PC-3 (cell line): ENCODE measurements at regions of chr15 and their contacts with region 1.

Region 1: DNA sequence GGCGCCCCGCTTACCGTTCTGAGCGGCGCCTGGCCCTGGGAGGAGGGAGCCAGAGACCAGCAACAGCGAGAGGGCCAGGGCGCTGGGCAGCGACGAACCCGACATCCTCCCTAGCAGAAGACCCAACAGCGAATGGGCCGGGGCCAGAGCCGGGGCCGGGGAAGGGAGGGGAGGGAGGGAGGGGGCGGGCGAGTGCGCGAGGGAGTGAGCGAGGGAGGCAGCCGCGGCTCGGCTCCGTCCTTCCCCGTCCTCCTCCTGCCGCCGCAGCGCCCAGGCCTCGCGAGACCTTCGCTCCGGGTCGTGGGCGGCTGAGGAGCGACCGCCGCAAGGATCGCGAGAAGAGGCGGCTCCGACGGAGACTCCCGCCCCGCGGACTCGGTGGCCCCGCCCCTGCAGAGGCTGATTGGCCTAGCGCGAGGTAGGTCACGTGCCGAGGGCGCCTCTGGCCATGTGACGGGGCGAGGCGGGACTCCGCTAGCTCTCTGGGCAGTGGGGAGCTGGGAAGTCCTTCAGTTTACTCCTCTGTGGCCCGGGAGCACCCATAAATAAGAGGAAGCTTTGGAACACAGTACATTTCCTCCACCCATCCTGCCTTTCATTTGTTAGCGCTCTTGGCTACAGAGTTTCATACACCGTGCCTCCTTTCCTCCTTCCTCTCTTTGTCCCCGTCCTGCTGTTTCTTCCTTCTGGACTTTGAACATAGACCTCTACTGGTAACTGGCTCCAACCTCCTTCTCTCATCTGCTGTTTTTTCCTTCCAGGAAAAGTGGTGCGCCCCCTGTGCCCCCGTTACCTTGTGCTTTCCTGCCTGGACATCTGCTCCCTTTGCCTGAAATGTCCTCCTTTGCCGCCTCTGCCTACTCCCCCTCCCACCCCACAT is at the start of gene NPTN:
- DNase-seq: peak; percentile 97
- ATAC-seq: peak; percentile 78
- H3K4me3 ChIP-seq: peak within 1 kb of the TSS; percentile 90
- H3K27ac ChIP-seq: peak within 1 kb of the TSS; percentile 100
- H3K4me1 ChIP-seq: peaks cover 57% of the 10 kb centered on the region
- H3K27me3 ChIP-seq: no peaks in the 10 kb centered on the region
- CTCF ChIP-seq: no peak
- total RNA-seq, gene NPTN: 115 and 164 TPM in 2 replicates

Region 2: DNA sequence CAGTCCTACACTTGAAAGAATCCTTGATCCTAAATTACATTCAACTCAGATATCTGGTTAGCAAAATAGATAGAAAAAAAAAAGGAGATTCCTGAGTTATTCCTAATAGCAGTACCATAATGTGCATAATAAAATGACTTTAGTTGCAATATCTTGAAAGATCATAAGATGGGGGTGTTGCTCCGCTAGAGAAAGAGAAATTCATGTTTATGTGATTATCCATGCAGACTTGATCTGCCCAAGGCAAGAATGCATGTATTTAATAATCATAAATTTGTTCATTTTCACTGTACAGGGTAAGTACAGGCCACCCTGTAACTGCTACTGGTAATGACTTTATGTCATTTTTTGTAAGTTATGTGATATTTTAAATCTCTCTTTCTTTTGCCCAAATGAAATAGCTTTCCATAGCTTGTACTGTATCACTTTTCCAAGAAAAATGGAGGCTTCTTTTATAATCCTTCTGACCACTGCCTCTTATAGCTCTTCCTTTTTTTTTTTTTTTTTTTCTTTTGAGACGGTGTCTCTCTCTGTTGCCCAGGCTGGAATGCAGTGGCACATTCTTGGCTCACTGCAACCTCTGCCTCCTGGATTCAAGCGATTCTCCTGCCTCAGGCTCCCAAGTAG is 349.1 kb before region 1 on chr15:
- CTCF ChIA-PET with region 1: no interaction called
- POLR2A ChIA-PET with region 1: no interaction called
- intact Hi-C with region 1: loop called (anchors 10 kb)
- DNase-seq: peak; percentile 55
- ATAC-seq: peak; percentile 42; the same call in 1 of the 2 replicates
- H3K4me3 ChIP-seq: no peak overlapping the region
- H3K27ac ChIP-seq: no peak overlapping the region
- H3K4me1 ChIP-seq: no peaks in the 10 kb centered on the region
- H3K27me3 ChIP-seq: no peaks in the 10 kb centered on the region
- CTCF ChIP-seq: peak; percentile 63

Region 3: GRCh38 chr15:73539212-73540125 is 93.9 kb before region 1 on chr15:
- CTCF ChIA-PET with region 1: no interaction called
- POLR2A ChIA-PET with region 1: no interaction called
- intact Hi-C with region 1: no loop called
- DNase-seq: no peak
- ATAC-seq: no peak
- H3K4me3 ChIP-seq: no peak overlapping the region
- H3K27ac ChIP-seq: no peak overlapping the region
- H3K4me1 ChIP-seq: peaks cover 14% of the 10 kb centered on the region
- H3K27me3 ChIP-seq: no peaks in the 10 kb centered on the region
- CTCF ChIP-seq: no peak

Region 4: DNA sequence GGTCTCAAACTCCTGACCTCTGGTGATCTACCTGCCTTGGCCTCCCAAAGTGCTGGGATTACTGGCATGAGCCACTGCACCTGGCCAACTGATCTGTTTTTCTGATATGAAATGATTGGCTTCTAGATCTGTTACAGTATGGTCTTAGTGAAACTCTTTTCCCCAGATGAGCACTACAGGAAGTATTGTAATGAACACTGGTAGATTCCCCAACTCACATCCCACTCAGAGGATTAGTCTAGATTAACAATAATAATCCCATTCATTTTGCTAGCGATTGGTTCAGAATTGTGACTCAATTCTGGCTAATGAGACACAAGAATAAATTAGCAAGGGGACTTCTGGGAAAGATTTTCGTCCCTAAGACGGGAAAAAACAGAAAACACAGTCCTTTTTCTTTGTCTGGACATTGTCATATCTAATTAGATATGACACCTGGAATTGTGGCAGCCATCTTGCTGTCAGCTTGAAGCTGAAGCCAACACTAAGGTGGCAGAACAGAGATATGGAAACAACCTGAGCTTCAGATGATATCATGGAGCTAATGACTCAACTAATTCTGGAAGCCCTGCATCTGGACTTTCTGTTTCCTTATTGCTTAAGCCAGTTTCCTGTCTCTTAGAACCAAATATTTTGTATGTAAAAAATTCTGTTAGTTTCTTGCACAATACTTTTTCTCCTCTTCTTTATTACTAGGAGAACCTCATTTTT is 17.2 kb after region 1 on chr15:
- CTCF ChIA-PET with region 1: interaction called, 10 read pairs
- POLR2A ChIA-PET with region 1: no interaction called
- intact Hi-C with region 1: no loop called
- DNase-seq: no peak
- ATAC-seq: no peak
- H3K4me3 ChIP-seq: no peak overlapping the region
- H3K27ac ChIP-seq: no peak overlapping the region
- H3K4me1 ChIP-seq: peaks cover 23% of the 10 kb centered on the region
- H3K27me3 ChIP-seq: no peaks in the 10 kb centered on the region
- CTCF ChIP-seq: no peak

Region 5: GRCh38 chr15:73683777-73684580 is 50.6 kb after region 1 on chr15 and contains the start of gene CD276:
- CTCF ChIA-PET with region 1: interaction called, 6 read pairs
- POLR2A ChIA-PET with region 1: no interaction called
- intact Hi-C with region 1: loop called (anchors 5 kb)
- DNase-seq: peak; percentile 72
- ATAC-seq: peak; percentile 76
- H3K4me3 ChIP-seq: peak within 1 kb of the TSS; percentile 93
- H3K27ac ChIP-seq: peak within 1 kb of the TSS; percentile 77
- H3K4me1 ChIP-seq: peaks cover 53% of the 10 kb centered on the region
- H3K27me3 ChIP-seq: no peaks in the 10 kb centered on the region
- CTCF ChIP-seq: peak; percentile 45; the same call in 1 of the 2 replicates
- total RNA-seq, gene CD276: 85.3 and 85.6 TPM in 2 replicates

Region 6: GRCh38 chr15:73697033-73697467 is 63.7 kb after region 1 on chr15:
- CTCF ChIA-PET with region 1: interaction called, 17 read pairs
- POLR2A ChIA-PET with region 1: no interaction called
- intact Hi-C with region 1: loop called (anchors 1 kb)
- DNase-seq: peak; percentile 96
- ATAC-seq: peak; percentile 94
- H3K4me3 ChIP-seq: no peak overlapping the region
- H3K27ac ChIP-seq: peak overlapping the region; percentile 84
- H3K4me1 ChIP-seq: peaks cover 23% of the 10 kb centered on the region
- H3K27me3 ChIP-seq: no peaks in the 10 kb centered on the region
- CTCF ChIP-seq: no peak